Activated CD8-positive, alpha-beta T cell treated with anti-CD3 and anti-CD28 coated beads, Interleukin-2, amount 10 ng/mL, durations not matched to agents 7 days and 5 days (primary cell): ENCODE measurements at regions of chr17 and their contacts with region 1.

Region 1: GRCh38 chr17:14300575-14301278 is at the start of gene HS3ST3B1:
- DNase-seq: peak; percentile 100
- ATAC-seq: peak; percentile 92
- H3K4me3 Mint-ChIP-seq: peak within 1 kb of the TSS; percentile 94
- H3K27ac Mint-ChIP-seq: peak within 1 kb of the TSS; percentile 95
- H3K4me1 Mint-ChIP-seq: peaks cover 68% of the 10 kb centered on the region
- H3K27me3 Mint-ChIP-seq: peaks cover 32% of the 10 kb centered on the region
- total RNA-seq, gene HS3ST3B1: 9.9 to 10.3 TPM

Region 2: GRCh38 chr17:13594762-13595598 is 705.7 kb before region 1 on chr17:
- CTCF ChIA-PET with region 1: interaction called, 62 read pairs
- POLR2A ChIA-PET with region 1: interaction called, 3 read pairs
- DNase-seq: peak; percentile 87
- ATAC-seq: peak; percentile 76
- H3K4me3 Mint-ChIP-seq: no peak overlapping the region
- H3K27ac Mint-ChIP-seq: no peak overlapping the region
- H3K4me1 Mint-ChIP-seq: peaks cover 2% of the 10 kb centered on the region
- H3K27me3 Mint-ChIP-seq: peaks cover 28% of the 10 kb centered on the region

Region 3: GRCh38 chr17:14196377-14196997 is 104.2 kb before region 1 on chr17:
- CTCF ChIA-PET with region 1: interaction called, 26 read pairs
- POLR2A ChIA-PET with region 1: interaction called, 64 read pairs
- DNase-seq: no peak
- ATAC-seq: peak; percentile 37
- H3K4me3 Mint-ChIP-seq: peak overlapping the region; percentile 57
- H3K27ac Mint-ChIP-seq: peak overlapping the region; percentile 92
- H3K4me1 Mint-ChIP-seq: peaks cover 90% of the 10 kb centered on the region
- H3K27me3 Mint-ChIP-seq: no peaks in the 10 kb centered on the region

Region 4: DNA sequence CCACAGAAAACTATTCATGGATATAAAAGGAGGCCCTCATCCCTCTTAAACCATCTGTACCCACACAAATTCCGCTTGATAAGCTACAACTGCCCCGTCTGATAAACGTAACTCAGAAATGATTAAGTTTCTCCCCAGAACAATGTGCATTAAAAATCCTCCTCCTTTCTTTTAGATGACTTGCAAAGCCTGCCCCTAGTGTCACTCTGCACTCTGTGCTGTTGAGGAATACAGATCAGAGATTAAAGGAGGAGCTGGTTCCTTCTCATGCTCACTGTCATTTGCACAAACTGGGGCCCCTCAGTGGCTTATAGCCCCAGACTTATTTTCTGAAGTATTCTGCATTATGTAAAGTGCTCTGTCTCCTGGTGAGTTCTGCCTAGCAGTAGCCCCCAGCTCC is 97.3 kb before region 1 on chr17:
- CTCF ChIA-PET with region 1: interaction called, 26 read pairs
- POLR2A ChIA-PET with region 1: interaction called, 64 read pairs
- DNase-seq: peak; percentile 49
- ATAC-seq: no peak
- H3K4me3 Mint-ChIP-seq: no peak overlapping the region
- H3K27ac Mint-ChIP-seq: peak overlapping the region; percentile 80
- H3K4me1 Mint-ChIP-seq: peaks cover 89% of the 10 kb centered on the region
- H3K27me3 Mint-ChIP-seq: no peaks in the 10 kb centered on the region

Region 5: DNA sequence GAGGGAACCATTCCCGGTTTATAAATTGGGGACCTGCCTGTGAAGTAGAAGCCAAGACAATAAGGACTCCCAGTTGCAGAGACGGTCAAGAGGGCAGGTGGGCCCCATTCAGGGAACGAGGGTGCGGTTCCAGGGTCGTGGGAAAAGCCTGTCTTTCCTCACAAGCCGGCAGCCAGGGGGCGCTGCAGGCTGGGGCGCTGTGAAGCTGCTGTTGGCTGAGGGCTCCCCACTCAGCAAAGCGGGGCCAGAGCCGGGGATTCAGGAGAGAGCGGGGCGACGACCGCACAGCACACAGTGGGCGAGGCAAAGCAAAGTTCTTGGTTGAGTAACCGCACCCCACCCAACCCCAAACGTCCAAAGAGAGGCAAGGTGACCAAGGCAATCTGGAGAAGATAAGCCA is 88.9 kb before region 1 on chr17:
- CTCF ChIA-PET with region 1: interaction called, 13 read pairs
- POLR2A ChIA-PET with region 1: interaction called, 16 read pairs
- DNase-seq: no peak
- ATAC-seq: no peak
- H3K4me3 Mint-ChIP-seq: no peak overlapping the region
- H3K27ac Mint-ChIP-seq: no peak overlapping the region
- H3K4me1 Mint-ChIP-seq: peaks cover 19% of the 10 kb centered on the region
- H3K27me3 Mint-ChIP-seq: no peaks in the 10 kb centered on the region

Region 6: GRCh38 chr17:14245020-14245419 is 55.7 kb before region 1 on chr17:
- CTCF ChIA-PET with region 1: no interaction called
- POLR2A ChIA-PET with region 1: no interaction called
- DNase-seq: no peak
- ATAC-seq: no peak
- H3K4me3 Mint-ChIP-seq: no peak overlapping the region
- H3K27ac Mint-ChIP-seq: no peak overlapping the region
- H3K4me1 Mint-ChIP-seq: no peaks in the 10 kb centered on the region
- H3K27me3 Mint-ChIP-seq: peaks cover 5% of the 10 kb centered on the region

Region 7: GRCh38 chr17:14427900-14428647 is 127.3 kb after region 1 on chr17:
- CTCF ChIA-PET with region 1: interaction called, 3 read pairs
- POLR2A ChIA-PET with region 1: interaction called, 22 read pairs
- DNase-seq: peak; percentile 75
- ATAC-seq: peak; percentile 99
- H3K4me3 Mint-ChIP-seq: peak overlapping the region; percentile 65
- H3K27ac Mint-ChIP-seq: peak overlapping the region; percentile 97
- H3K4me1 Mint-ChIP-seq: peaks cover 46% of the 10 kb centered on the region
- H3K27me3 Mint-ChIP-seq: no peaks in the 10 kb centered on the region

Region 8: DNA sequence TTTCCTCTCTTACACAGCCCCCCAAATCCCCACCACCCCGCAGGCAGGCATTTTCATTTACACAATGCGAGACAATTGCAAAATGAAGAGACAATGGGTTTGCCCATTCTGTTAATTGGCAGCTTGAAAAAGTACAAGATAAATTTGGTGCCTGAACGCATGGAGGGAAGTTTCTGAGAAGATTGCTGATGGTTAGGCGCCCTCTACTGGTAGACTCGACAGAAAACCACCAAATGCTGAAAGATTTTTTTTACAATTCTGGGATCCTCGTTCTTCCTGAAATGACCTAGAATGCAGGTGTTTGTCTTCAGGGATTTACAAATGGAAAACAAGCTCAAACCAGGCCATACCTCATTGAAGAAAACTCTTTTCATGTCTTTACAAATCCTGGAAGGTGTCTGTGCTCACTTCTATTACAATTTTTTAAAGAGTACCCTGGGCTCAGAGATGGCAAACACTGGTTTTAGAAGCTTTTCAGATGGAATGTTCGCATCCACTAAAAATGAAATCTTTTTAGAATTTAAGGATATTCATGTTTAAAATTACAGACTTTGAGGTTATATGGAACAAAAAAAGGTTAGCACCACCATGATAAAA is 625.9 kb after region 1 on chr17:
- CTCF ChIA-PET with region 1: interaction called, 13 read pairs
- POLR2A ChIA-PET with region 1: no interaction called
- DNase-seq: peak; percentile 66
- ATAC-seq: no peak
- H3K4me3 Mint-ChIP-seq: no peak overlapping the region
- H3K27ac Mint-ChIP-seq: no peak overlapping the region
- H3K4me1 Mint-ChIP-seq: no peaks in the 10 kb centered on the region
- H3K27me3 Mint-ChIP-seq: no peaks in the 10 kb centered on the region